Activated CD4-positive, alpha-beta T cell treated with anti-CD3 and anti-CD28 coated beads, Interleukin-2, amount 10 ng/mL, durations not matched to agents 7 days and 5 days (primary cell): ENCODE measurements at regions of chr7 and their contacts with region 1.

Region 1: DNA sequence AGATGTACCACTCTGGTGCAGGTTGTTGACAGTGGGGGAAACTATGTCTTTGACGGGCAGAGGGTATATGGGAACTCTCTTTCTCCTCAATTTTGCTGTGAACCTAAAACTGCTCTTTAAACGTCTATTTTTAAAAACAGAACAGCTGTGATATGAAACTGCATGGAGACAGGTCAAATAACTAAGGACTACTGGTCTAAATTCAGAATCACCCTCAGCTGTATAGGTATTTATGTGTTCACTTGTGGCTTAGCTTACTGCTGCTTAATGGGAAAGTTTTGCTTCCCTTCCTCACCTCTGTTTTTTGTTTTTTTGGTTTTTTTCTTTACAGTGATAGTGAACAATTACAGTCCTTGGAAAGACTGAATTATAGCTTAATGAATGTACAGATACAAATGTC is 86.9 kb upstream of the STRIP2 start:
- DNase-seq: no peak
- H3K4me3 Mint-ChIP-seq: no peak overlapping the region
- H3K27ac Mint-ChIP-seq: no peak overlapping the region
- H3K4me1 Mint-ChIP-seq: peaks cover 28% of the 10 kb centered on the region
- H3K27me3 Mint-ChIP-seq: no peaks in the 10 kb centered on the region

Region 2: DNA sequence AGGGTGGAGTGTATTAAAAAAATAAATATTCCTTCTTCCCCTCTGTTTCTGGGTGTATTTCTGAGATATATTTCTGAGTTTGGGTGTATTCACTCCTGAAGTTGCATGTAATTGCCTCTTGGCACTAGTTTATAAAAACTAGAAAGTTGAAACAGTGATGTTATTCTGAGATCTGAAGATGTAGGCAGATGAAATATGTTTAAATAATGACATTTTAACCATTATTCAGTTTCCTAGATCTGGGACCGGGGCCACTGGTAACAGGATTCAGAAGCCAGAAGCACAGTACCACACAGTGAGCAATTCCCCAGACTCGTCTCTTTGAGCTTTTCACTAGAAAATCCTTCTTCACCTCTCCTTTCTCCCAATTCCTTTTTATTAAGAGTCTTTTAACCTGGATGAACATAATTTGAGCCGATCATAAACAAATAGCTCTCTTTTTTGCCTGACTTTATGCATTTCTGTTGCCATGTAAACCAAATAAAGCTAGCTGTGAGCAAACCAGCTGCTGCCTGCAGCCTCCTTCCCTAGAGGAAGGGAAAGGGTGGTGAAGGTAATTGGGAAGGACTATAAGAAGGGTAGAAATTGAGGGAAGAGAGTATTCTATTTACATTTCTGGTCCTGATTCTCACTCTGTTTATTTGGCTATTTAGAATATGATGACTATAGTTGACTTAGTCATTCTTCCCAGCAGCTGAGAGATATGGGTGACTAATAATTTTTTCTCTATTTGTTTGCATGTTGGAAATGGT is 14.9 kb before region 1 on chr7:
- CTCF ChIA-PET with region 1: interaction called, 5 read pairs
- POLR2A ChIA-PET with region 1: interaction called, 24 read pairs
- DNase-seq: no peak
- H3K4me3 Mint-ChIP-seq: no peak overlapping the region
- H3K27ac Mint-ChIP-seq: no peak overlapping the region
- H3K4me1 Mint-ChIP-seq: no peaks in the 10 kb centered on the region
- H3K27me3 Mint-ChIP-seq: no peaks in the 10 kb centered on the region